Panc1 (cell line): ENCODE measurements at regions of chr17 and their contacts with region 1.

Region 1: GRCh38 chr17:14300575-14301278 is at the start of gene HS3ST3B1:
- DNase-seq: peak; percentile 57
- ATAC-seq: peak; percentile 93
- H3K4me3 ChIP-seq: peak within 1 kb of the TSS; percentile 46 to 60
- H3K27ac ChIP-seq: no peak within 1 kb of the TSS
- H3K4me1 ChIP-seq: no peaks in the 10 kb centered on the region; the same call in 1 of the 2 replicates
- H3K27me3 ChIP-seq: peaks cover 8% of the 10 kb centered on the region; the same call in 1 of the 2 replicates
- CTCF ChIP-seq: no peak; the same call in 1 of the 2 replicates
- total RNA-seq, gene HS3ST3B1: 0.59 TPM

Region 2: DNA sequence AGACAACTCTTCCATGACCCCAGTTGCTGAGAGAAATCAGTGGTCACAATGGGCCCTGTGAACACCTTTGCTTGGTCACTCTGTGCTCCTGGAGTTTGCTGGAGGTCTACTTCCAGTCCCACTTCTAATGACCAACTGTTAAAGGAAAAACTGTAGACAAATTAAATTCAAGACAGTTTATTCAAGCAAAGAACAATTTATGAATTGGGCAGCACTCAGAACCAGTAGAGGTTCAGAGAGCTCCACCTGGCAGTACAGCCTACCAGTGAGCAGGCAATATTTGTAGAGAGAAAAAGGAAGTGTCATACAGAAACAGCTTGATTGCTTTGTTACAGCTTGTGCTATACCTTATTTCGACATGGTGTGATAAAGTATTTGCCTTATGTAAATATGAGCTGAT is 116.6 kb after region 1 on chr17:
- CTCF ChIA-PET with region 1: no interaction called
- POLR2A ChIA-PET with region 1: no interaction called
- in situ Hi-C with region 1: no loop called
- intact Hi-C with region 1: no loop called
- DNase-seq: no peak
- ATAC-seq: no peak
- H3K4me3 ChIP-seq: no peak overlapping the region
- H3K27ac ChIP-seq: no peak overlapping the region
- H3K4me1 ChIP-seq: no peaks in the 10 kb centered on the region
- H3K27me3 ChIP-seq: no peaks in the 10 kb centered on the region
- CTCF ChIP-seq: no peak

Region 3: DNA sequence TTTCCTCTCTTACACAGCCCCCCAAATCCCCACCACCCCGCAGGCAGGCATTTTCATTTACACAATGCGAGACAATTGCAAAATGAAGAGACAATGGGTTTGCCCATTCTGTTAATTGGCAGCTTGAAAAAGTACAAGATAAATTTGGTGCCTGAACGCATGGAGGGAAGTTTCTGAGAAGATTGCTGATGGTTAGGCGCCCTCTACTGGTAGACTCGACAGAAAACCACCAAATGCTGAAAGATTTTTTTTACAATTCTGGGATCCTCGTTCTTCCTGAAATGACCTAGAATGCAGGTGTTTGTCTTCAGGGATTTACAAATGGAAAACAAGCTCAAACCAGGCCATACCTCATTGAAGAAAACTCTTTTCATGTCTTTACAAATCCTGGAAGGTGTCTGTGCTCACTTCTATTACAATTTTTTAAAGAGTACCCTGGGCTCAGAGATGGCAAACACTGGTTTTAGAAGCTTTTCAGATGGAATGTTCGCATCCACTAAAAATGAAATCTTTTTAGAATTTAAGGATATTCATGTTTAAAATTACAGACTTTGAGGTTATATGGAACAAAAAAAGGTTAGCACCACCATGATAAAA is 625.9 kb after region 1 on chr17:
- CTCF ChIA-PET with region 1: no interaction called
- POLR2A ChIA-PET with region 1: no interaction called
- in situ Hi-C with region 1: no loop called
- intact Hi-C with region 1: loop called (anchors 10 kb)
- DNase-seq: peak; percentile 22
- ATAC-seq: no peak
- H3K4me3 ChIP-seq: no peak overlapping the region
- H3K27ac ChIP-seq: no peak overlapping the region
- H3K4me1 ChIP-seq: no peaks in the 10 kb centered on the region
- H3K27me3 ChIP-seq: no peaks in the 10 kb centered on the region
- CTCF ChIP-seq: peak; percentile 79